MCF 10A (cell line): ENCODE measurements at regions of chr17 and their contacts with region 1.

Region 1: DNA sequence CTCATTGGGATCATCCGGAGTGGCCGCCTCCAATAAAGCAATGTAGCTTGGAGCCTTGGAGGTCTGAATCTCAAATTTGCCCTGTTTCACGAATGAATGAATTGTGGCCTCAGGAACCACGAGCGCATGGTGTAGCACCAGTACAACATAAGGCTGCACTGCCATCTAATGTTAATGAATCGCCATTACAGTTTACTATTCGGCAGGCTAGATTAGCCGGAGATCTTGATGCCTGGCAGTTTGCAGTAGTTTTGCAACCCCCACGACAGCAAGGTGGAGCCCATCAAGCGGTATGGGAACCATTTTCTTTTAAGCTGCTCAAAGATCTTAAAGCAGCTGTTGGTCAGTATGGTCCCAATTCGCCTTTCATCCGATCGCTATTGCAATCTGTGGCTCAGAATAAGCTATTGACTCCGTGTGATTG is 18.8 kb downstream of the ALOX15B start:
- DNase-seq: peak; percentile 86
- H3K4me3 Mint-ChIP-seq: no peak overlapping the region
- H3K27ac Mint-ChIP-seq: no peak overlapping the region
- H3K4me1 Mint-ChIP-seq: peaks cover 34% of the 10 kb centered on the region
- H3K27me3 Mint-ChIP-seq: peaks cover 12% of the 10 kb centered on the region
- CTCF ChIP-seq: peak; percentile 86

Region 2: DNA sequence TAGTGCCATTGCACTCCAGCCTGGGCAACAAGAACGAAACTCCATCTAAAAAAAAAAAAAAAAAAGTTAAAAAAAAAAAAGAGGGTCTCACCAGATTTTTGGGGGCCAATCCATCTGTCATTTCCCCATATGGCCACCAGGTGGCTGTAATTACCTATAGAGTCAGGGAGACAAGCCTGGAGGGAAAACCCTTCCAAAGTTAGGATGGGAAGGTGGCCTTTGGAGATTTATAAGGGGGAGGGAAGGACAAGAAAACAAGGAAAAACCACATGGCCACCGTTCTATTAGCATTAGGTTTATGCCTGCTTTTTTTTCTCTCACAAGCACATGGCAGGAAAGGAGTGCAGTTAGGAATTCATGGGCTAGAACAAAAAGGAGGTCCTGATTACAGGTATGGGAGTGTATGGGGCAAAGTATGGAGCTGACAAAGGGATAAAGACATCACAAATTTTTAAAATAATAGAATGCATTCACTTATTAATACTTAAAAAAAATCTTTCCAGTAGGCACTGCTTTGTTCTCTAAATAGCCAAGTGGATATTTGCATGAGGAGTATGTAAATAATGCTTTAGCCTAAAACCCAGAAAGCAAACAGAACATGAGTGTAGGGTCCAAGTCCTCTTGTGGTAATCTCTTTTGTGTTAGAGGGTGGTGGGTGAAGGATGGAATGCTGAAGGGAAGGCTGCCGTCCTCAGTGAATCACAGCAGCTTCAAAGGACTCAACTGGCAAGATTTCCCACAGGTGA is 194.8 kb before region 1 on chr17:
- CTCF ChIA-PET with region 1: interaction called, 17 read pairs
- POLR2A ChIA-PET with region 1: interaction called, 3 read pairs
- intact Hi-C with region 1: loop called (anchors 5 kb)
- DNase-seq: peak; percentile 62
- H3K4me3 Mint-ChIP-seq: no peak overlapping the region
- H3K27ac Mint-ChIP-seq: no peak overlapping the region
- H3K4me1 Mint-ChIP-seq: peaks cover 11% of the 10 kb centered on the region
- H3K27me3 Mint-ChIP-seq: no peaks in the 10 kb centered on the region
- CTCF ChIP-seq: peak; percentile 75

Region 3: GRCh38 chr17:8016632-8017478 is 40.8 kb before region 1 on chr17:
- CTCF ChIA-PET with region 1: interaction called, 86 read pairs
- POLR2A ChIA-PET with region 1: interaction called, 19 read pairs
- intact Hi-C with region 1: loop called (anchors 1 kb)
- DNase-seq: peak; percentile 87
- H3K4me3 Mint-ChIP-seq: peak overlapping the region; percentile 51
- H3K27ac Mint-ChIP-seq: peak overlapping the region; percentile 95
- H3K4me1 Mint-ChIP-seq: peaks cover 44% of the 10 kb centered on the region
- H3K27me3 Mint-ChIP-seq: no peaks in the 10 kb centered on the region
- CTCF ChIP-seq: peak; percentile 90

Region 4: DNA sequence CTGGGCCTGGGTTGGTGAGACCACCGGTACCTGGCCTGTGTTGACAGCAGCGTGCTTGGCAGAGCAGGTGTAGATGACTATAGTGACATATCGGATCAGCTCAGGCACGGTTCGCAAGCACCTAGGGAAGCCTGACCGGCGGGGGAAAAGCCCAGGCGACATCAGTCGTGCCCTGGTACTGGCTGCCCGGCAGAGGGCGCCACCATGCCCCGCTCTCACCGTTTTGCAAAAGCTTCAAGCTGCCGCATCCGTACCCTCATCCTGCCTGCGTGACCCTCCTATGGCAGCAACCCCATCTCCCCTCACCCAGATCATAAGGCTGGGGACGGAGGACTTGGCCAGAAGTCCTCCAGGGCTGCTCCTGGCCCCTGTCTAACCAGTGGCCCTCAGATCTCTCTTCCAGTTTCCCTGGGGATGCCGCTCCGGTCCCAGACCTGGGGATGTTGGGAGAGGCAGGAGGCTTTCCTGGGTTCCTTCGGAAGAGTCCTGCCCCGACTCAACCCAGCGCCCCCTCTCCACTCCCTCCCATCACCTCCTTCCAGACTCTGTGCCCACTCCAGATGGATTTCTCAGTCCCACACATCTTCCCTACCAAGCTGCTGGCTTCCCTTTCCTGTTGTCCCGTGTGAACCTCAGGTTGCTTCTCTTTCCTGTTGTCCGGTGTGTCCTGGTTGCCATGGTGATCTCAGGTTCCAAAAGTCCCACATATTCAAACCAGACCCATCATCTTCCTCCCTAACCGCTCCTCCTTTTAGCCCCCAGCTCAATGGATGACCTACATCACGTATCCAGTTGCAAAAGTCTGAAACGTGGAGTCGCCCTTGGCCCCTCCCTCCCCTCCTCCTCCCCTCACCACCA is 16.2 kb after region 1 on chr17:
- CTCF ChIA-PET with region 1: interaction called, 106 read pairs
- POLR2A ChIA-PET with region 1: interaction called, 8 read pairs
- intact Hi-C with region 1: no loop called
- DNase-seq: peak; percentile 69
- H3K4me3 Mint-ChIP-seq: peak overlapping the region; percentile 52
- H3K27ac Mint-ChIP-seq: no peak overlapping the region
- H3K4me1 Mint-ChIP-seq: peaks cover 19% of the 10 kb centered on the region
- H3K27me3 Mint-ChIP-seq: peaks cover 23% of the 10 kb centered on the region
- CTCF ChIP-seq: peak; percentile 94

Region 5: DNA sequence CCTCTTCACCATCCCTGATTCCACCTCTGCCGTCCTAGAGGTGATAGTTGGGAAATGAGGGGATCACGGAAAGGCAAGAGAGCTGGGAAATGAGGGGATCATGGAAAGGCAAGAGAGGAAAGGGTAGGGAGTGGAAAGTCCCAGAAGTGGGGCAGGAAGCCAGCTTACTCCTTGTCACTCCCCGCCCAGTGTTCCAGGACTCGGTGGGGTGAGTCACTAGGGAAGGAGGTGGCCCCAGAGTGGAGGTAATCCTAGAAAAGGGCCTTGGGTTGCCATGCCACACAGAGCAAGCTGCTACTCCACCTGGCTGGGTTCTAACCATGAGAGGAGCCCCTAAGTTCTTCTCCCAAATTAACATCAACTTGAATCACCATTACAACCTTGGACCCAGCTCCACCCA is 45.8 kb after region 1 on chr17:
- CTCF ChIA-PET with region 1: interaction called, 62 read pairs
- POLR2A ChIA-PET with region 1: interaction called, 3 read pairs
- intact Hi-C with region 1: no loop called
- DNase-seq: peak; percentile 81
- H3K4me3 Mint-ChIP-seq: peak overlapping the region; percentile 32
- H3K27ac Mint-ChIP-seq: peak overlapping the region; percentile 78
- H3K4me1 Mint-ChIP-seq: peaks cover 47% of the 10 kb centered on the region
- H3K27me3 Mint-ChIP-seq: no peaks in the 10 kb centered on the region
- CTCF ChIP-seq: no peak

Region 6: GRCh38 chr17:8300627-8301242 is 243.0 kb after region 1 on chr17:
- CTCF ChIA-PET with region 1: interaction called, 13 read pairs
- POLR2A ChIA-PET with region 1: interaction called, 4 read pairs
- intact Hi-C with region 1: loop called (anchors 5 kb)
- DNase-seq: peak; percentile 77
- H3K4me3 Mint-ChIP-seq: no peak overlapping the region
- H3K27ac Mint-ChIP-seq: no peak overlapping the region
- H3K4me1 Mint-ChIP-seq: peaks cover 13% of the 10 kb centered on the region
- H3K27me3 Mint-ChIP-seq: no peaks in the 10 kb centered on the region
- CTCF ChIP-seq: peak; percentile 72